ENCODE measurements at regions of chr15 and their contacts with region 1.

Region 1: GRCh38 chr15:72473614-72474465 is at the start of gene ARIH1:
- DNase-seq: peak; percentile 96 to 99 (median 98)
- H3K4me3 ChIP-seq: peak within 1 kb of the TSS; percentile 63 to 99 (median 86)
- H3K27ac ChIP-seq: peak within 1 kb of the TSS; percentile 96 to 100 (median 99)
- H3K27me3 ChIP-seq: no peaks in the 10 kb centered on the region
- CTCF ChIP-seq: peak in 32 of 56 donors; percentile 11 to 41 (median 24)
- total RNA-seq, gene ARIH1: 131 to 235 (median 191) TPM

Region 2: DNA sequence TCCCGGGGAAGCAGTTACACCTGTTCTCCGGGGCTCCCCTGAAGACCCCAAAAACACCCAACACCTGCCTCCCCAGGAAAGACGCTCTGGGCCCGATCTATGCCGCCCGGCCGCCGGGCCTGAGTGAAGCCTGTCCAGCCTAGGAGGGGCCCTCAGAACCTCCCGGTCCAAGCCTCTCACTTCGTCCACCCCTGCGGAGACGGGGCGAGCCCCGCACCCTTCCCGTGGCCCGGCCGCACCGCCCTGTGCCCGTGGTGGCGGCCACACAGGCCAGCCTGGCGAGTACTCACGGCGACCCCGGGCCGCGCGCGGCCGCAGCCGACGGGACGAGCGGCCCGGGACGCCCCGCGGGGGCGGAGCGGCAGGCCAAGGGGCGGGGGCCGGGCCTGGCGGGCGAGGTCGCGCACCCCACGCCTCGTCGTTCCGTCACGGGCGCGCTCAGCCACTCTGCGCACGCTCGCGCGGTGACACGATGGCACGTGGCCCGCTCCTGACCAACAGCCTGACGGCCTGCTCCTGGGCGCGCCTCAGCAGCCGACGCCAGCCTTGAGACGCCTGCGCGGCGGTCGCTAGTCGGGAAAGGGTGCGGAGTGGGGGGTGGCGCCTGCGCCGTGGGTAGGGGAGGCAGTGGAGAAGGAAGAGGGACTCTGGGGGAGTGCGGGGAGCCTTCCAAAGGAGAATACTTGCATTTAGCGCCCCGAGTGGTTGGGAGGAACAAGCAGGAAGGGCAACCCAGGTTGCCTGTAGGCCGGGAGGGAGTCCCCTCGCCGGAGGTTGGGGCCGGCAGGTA is 201.4 kb before region 1 on chr15 and contains the start of gene PARP6:
- intact Hi-C with region 1: loop called in 1 of 2 experiments (anchors 2 kb)
- DNase-seq: peak; percentile 95 to 98 (median 97)
- H3K4me3 ChIP-seq: peak within 1 kb of the TSS; percentile 66 to 99 (median 93)
- H3K27ac ChIP-seq: peak within 1 kb of the TSS; percentile 18 to 96 (median 87)
- H3K27me3 ChIP-seq: no peaks in the 10 kb centered on the region
- CTCF ChIP-seq: peak; percentile 71 to 98 (median 89)
- total RNA-seq, gene PARP6: 89.7 to 152 (median 117) TPM

Region 3: DNA sequence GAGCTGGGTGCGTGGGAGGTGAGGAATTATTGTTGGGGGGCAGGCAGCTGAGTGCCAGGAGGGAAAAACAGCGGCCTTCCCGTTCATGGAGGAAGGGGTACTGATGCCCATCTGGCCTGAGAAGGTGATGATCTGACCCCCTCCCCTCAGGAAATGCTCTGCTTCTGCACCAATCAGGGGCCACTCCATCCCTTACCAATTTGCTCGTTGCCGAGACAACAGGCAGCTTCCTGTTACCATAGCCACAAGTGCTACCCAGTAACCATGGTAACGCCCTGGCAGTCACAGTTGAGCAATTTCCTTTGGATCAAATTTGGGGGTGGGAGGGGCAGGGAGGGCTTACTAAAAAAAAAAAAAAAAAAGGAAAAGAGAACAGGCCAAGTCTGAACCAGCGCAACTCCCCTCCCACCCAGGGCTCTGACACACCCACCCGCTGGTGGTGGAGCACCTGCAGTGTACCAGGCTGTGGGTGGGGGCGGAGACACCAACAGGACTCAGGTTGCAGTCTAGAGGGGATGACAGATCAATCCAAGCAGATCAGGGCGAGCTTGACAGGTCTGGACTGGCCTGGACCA is 167.5 kb before region 1 on chr15:
- intact Hi-C with region 1: no loop called
- DNase-seq: peak in 9 of 10 donors; percentile 50 to 88 (median 74)
- H3K4me3 ChIP-seq: peak overlapping the region in 28 of 59 donors; percentile 3 to 48 (median 20)
- H3K27ac ChIP-seq: peak overlapping the region in 56 of 59 donors; percentile 15 to 91 (median 73)
- H3K27me3 ChIP-seq: no peaks in the 10 kb centered on the region
- CTCF ChIP-seq: no peak

Region 4: GRCh38 chr15:72375847-72376581 is 97.8 kb before region 1 on chr15 and contains the start of gene HEXA:
- intact Hi-C with region 1: loop called (anchors 2 kb)
- DNase-seq: peak; percentile 88 to 96 (median 94)
- H3K4me3 ChIP-seq: peak within 1 kb of the TSS; percentile 69 to 100 (median 96)
- H3K27ac ChIP-seq: peak within 1 kb of the TSS; percentile 49 to 98 (median 90)
- H3K27me3 ChIP-seq: no peaks in the 10 kb centered on the region
- CTCF ChIP-seq: peak in 30 of 56 donors; percentile 6 to 47 (median 30)
- total RNA-seq, gene HEXA: 59.4 to 109 (median 80.2) TPM

Region 5: DNA sequence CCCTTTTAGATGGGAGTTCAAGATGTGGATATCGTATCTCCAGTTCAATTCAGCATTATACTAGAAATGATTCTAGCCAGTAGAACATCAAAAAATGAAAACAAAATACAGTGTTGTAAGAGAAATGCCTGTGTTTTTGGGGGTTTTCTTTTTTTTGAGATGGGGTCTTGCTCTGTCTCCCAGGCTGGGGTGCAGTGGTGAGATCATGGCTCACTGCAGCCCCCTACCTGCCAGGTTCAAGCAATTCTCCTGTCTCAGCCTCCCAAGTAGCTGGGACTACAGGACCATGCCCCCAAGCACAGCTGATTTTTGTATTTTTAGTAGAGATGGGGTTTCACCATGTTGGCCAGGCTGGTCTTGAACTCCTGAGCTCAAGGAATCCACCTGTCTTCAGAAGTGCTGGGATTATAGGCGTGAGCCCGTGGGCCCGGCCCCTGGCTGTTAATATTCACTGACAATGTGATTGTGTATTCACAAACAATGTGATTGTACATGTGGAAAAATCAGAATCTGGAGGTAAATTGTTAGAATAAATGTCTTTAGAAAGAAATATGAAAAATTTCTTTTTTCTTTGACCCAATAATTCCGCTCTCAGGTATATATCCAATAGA is 59.3 kb after region 1 on chr15:
- intact Hi-C with region 1: loop called in 1 of 2 experiments (anchors 5 kb)
- DNase-seq: no peak
- H3K4me3 ChIP-seq: no peak overlapping the region
- H3K27ac ChIP-seq: no peak overlapping the region
- H3K27me3 ChIP-seq: no peaks in the 10 kb centered on the region
- CTCF ChIP-seq: peak in 37 of 56 donors; percentile 8 to 60 (median 36)

Region 6: DNA sequence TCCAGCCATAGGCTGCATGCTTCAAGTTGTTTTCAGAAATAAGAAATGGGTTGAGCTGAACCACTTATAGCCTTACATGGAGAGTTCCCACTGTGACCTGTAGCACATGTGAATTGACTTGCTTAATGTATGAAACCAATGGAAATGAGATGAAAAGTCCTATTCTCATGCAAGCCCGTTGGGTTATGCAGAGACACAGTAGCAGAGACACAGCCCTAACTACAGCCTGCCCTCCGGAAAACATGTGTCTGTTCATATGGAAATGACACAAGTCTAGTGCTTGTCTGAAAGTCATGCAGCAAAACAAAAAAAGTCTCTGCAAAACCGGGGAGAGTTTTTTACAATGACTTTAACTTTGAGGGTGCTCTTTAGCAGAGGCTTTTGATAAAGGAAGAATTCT is 197.7 kb after region 1 on chr15:
- intact Hi-C with region 1: loop called in 1 of 2 experiments (anchors 10 kb)
- DNase-seq: no peak
- H3K4me3 ChIP-seq: no peak overlapping the region
- H3K27ac ChIP-seq: no peak overlapping the region
- H3K27me3 ChIP-seq: peaks cover 0 to 25% (median 6%) of the 10 kb centered on the region in 45 donors
- CTCF ChIP-seq: no peak